ENCODE measurements at regions of chr17 and their contacts with region 1.

Region 1: GRCh38 chr17:57243171-57243948 is 13.0 kb upstream of the MSI2 start:
- DNase-seq: peak; percentile 51 to 85 (median 83)
- ATAC-seq: peak; percentile 63 to 79
- H3K4me3 ChIP-seq: no peak overlapping the region
- H3K27ac ChIP-seq: no peak overlapping the region
- H3K4me1 ChIP-seq: peaks cover 3% of the 10 kb centered on the region
- H3K27me3 ChIP-seq: no peaks in the 10 kb centered on the region

Region 2: DNA sequence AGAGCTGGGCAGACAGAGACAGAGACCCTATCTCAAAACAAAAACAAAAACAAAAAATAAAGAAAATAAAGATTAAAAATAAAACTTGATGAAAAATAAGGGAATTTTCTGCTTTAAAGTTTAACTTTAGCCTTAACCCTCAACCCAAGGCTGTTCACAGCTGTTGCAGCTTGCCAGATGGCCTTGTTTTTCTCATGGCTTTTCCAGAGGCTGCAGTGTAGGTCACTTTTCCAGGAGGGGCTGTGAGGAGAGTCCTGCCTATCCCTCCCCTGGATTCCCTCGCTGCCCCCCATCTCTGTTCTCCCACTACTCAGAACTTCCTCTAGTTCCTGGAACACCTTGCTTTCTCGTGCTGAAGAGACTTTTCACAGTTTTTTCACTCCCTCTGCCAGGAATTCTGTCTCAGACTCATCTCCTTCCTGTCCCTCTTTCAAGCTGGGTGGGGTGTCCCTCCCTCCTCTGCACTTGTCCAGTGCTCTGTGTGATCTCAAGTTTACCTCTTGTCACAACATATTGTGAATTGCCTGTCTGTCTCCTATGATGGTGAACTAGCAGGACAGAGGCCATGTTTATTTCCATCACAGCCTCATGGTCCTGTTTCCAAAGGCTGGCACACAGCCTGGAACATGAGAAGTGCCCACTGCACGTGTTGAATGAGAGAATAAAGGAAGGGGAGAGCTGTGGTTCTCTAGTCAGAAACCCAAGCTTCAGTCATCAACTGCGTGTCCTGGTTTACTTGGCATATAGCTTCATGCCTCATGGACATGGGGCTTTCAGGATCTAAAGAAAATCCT is 56.9 kb before region 1 on chr17:
- intact Hi-C with region 1: no loop called
- DNase-seq: no peak
- ATAC-seq: no peak
- H3K4me3 ChIP-seq: no peak overlapping the region
- H3K27ac ChIP-seq: no peak overlapping the region
- H3K4me1 ChIP-seq: no peaks in the 10 kb centered on the region
- H3K27me3 ChIP-seq: no peaks in the 10 kb centered on the region

Region 3: DNA sequence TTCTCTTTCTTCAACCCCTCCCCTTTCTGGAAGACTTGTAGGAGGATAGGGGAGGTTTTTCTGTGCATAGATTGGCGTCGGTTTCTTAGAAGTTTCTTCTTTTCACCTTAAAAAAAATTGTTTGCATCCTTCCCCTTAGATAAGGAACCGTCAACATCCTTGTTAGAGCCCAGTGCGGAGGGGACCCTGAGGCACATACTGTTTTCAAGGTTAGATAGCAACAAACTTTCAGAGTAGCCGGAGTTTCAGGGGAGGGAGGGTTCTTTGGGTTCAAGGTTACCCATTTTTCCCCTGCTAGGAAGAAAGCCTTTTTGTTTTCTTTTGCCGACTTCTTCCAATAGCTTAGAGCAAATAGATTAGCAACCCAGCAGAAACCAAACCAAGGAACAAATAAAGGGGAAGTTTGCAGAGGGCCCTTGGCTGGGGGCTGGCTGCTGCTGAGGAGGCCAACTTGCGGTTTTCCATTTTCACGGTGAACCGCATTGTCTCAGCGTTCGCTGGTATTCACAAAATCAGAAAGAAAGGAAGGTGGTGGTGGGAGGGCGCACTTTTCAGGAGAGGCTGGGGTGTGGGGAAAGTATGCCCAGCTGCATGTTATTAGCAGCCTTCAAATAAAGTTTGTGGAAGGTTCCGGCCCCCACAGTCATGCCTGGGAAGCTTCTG is 41.8 kb after region 1 on chr17:
- intact Hi-C with region 1: no loop called
- DNase-seq: no peak
- ATAC-seq: no peak
- H3K4me3 ChIP-seq: no peak overlapping the region
- H3K27ac ChIP-seq: no peak overlapping the region
- H3K4me1 ChIP-seq: peaks cover 16% of the 10 kb centered on the region
- H3K27me3 ChIP-seq: no peaks in the 10 kb centered on the region

Region 4: DNA sequence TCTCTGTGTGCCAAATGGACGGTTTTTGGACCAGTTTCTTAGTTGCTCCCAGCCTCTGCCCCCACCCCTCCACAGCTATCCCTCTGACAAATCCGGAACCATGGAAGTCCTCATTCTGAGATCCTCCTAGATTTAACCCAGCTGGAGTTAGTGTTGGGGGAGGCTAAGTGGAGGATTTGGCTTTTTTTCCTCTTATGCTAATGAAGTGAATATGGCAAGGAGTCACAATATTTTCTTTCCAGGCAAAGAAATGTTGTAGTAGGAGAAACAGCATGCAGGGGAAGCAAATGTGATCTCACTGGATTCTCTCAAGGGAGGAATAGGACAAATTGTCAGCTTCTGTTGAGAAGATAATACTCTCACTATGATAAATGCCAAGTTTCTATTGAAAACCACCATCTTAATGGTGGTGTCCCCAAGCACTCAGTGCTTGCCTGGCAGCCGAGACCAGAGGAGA is 172.4 kb after region 1 on chr17:
- intact Hi-C with region 1: no loop called
- DNase-seq: peak in 1 of 3 donors; percentile 61
- ATAC-seq: peak; percentile 72 to 84
- H3K4me3 ChIP-seq: no peak overlapping the region
- H3K27ac ChIP-seq: no peak overlapping the region
- H3K4me1 ChIP-seq: no peaks in the 10 kb centered on the region
- H3K27me3 ChIP-seq: no peaks in the 10 kb centered on the region

Region 5: GRCh38 chr17:57440522-57441485 is 197.4 kb after region 1 on chr17:
- intact Hi-C with region 1: loop called in 1 of 4 experiments (anchors 10 kb)
- DNase-seq: peak; percentile 86 to 89 (median 88)
- ATAC-seq: peak; percentile 77 to 94
- H3K4me3 ChIP-seq: no peak overlapping the region
- H3K27ac ChIP-seq: peak overlapping the region; percentile 70
- H3K4me1 ChIP-seq: peaks cover 20% of the 10 kb centered on the region
- H3K27me3 ChIP-seq: no peaks in the 10 kb centered on the region

Region 6: GRCh38 chr17:57662644-57663308 is 419.4 kb after region 1 on chr17:
- intact Hi-C with region 1: loop called in 1 of 4 experiments (anchors 10 kb)
- DNase-seq: peak; percentile 99
- ATAC-seq: peak; percentile 98 to 99
- H3K4me3 ChIP-seq: peak overlapping the region; percentile 16
- H3K27ac ChIP-seq: peak overlapping the region; percentile 97
- H3K4me1 ChIP-seq: peaks cover 2% of the 10 kb centered on the region
- H3K27me3 ChIP-seq: no peaks in the 10 kb centered on the region

Region 7: GRCh38 chr17:57671667-57672632 is 428.6 kb after region 1 on chr17:
- intact Hi-C with region 1: loop called in 3 of 4 experiments (anchors 5 to 10 kb)
- DNase-seq: peak; percentile 82 to 92 (median 91)
- ATAC-seq: peak; percentile 92 to 94
- H3K4me3 ChIP-seq: no peak overlapping the region
- H3K27ac ChIP-seq: no peak overlapping the region
- H3K4me1 ChIP-seq: no peaks in the 10 kb centered on the region
- H3K27me3 ChIP-seq: no peaks in the 10 kb centered on the region

Region 8: GRCh38 chr17:57747221-57748017 is 504.1 kb after region 1 on chr17:
- intact Hi-C with region 1: loop called in 1 of 4 experiments (anchors 5 kb)
- DNase-seq: no peak
- ATAC-seq: peak; percentile 36 to 52
- H3K4me3 ChIP-seq: no peak overlapping the region
- H3K27ac ChIP-seq: no peak overlapping the region
- H3K4me1 ChIP-seq: no peaks in the 10 kb centered on the region
- H3K27me3 ChIP-seq: no peaks in the 10 kb centered on the region